ENCODE measurements at regions of chr11 and their contacts with region 1.

Region 1: GRCh38 chr11:36478700-36479329 is 31.3 kb downstream of the TRAF6 start:
- DNase-seq: peak; percentile 71 to 83 (median 79)
- H3K4me3 ChIP-seq: no peak overlapping the region
- H3K27ac ChIP-seq: no peak overlapping the region
- H3K4me1 ChIP-seq: peaks cover 0 to 3% (median 0%) of the 10 kb centered on the region in 4 experiments
- H3K27me3 ChIP-seq: no peaks in the 10 kb centered on the region

Region 2: GRCh38 chr11:36271794-36272407 is 206.9 kb before region 1 on chr11:
- CTCF ChIA-PET with region 1: interaction called, 14 read pairs
- POLR2A ChIA-PET with region 1: no interaction called
- DNase-seq: peak in 1 of 3 donors; percentile 10
- H3K4me3 ChIP-seq: no peak overlapping the region
- H3K27ac ChIP-seq: no peak overlapping the region
- H3K4me1 ChIP-seq: no peaks in the 10 kb centered on the region
- H3K27me3 ChIP-seq: no peaks in the 10 kb centered on the region

Region 3: DNA sequence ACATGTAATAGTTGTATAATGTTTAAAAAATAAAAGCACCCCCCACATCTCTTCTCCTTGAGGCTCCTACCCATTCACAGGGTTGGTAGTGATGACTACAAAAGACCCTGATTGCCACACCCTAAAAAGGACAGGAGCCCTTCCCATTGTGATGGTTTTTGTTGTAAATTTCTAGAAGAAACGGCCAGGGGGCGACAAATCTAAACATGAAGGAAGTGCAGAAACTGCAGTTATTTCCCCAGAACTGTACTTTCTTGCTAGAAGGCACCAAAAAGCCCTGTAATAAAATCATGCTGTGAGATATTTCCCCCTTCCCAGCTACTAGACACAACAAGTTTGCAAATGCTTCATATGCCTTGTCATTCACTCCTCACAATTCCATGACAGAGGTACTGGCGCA is 171.9 kb before region 1 on chr11:
- CTCF ChIA-PET with region 1: interaction called, 25 read pairs
- POLR2A ChIA-PET with region 1: no interaction called
- DNase-seq: peak; percentile 68 to 80 (median 74)
- H3K4me3 ChIP-seq: no peak overlapping the region
- H3K27ac ChIP-seq: no peak overlapping the region
- H3K4me1 ChIP-seq: peaks cover 0 to 5% (median 0%) of the 10 kb centered on the region in 4 experiments
- H3K27me3 ChIP-seq: no peaks in the 10 kb centered on the region

Region 4: GRCh38 chr11:36363361-36364268 is 115.2 kb before region 1 on chr11:
- CTCF ChIA-PET with region 1: interaction called, 14 read pairs
- POLR2A ChIA-PET with region 1: no interaction called
- DNase-seq: peak in 2 of 3 donors; percentile 77 to 87
- H3K4me3 ChIP-seq: no peak overlapping the region
- H3K27ac ChIP-seq: no peak overlapping the region
- H3K4me1 ChIP-seq: peaks cover 19 to 73% (median 57%) of the 10 kb centered on the region in 4 experiments
- H3K27me3 ChIP-seq: no peaks in the 10 kb centered on the region

Region 5: GRCh38 chr11:36419791-36420424 is 58.9 kb before region 1 on chr11:
- CTCF ChIA-PET with region 1: interaction called, 17 read pairs
- POLR2A ChIA-PET with region 1: no interaction called
- DNase-seq: no peak
- H3K4me3 ChIP-seq: no peak overlapping the region
- H3K27ac ChIP-seq: no peak overlapping the region
- H3K4me1 ChIP-seq: peaks cover 32 to 72% (median 54%) of the 10 kb centered on the region in 4 experiments
- H3K27me3 ChIP-seq: no peaks in the 10 kb centered on the region

Region 6: DNA sequence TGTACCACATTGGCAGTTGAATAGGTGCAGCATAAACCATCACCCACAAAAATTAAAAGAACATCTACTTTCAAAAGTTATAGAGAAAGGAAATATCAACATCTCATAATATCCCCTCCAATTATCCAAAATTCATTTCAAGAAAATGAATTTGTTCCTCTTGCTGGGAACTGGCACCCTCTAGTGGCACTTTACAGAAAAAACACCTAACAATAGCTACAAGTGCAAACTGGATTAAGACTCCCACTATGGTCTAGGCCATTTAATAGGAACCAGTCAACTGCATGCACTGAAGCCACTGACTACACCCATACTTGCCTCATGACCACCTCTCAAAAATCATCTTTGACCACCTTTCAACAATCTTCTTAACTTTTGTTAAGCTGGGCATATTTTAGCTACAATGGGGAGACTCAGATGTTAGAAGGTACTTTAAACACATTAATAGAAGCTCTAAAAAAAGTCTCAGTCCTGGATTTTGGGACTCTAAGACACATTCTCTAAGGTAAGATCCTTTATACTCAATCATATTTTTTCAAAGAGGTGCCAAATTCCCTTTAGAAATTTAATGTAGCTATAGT is 14.0 kb after region 1 on chr11:
- CTCF ChIA-PET with region 1: interaction called, 36 read pairs
- POLR2A ChIA-PET with region 1: no interaction called
- DNase-seq: peak; percentile 73 to 87 (median 80)
- H3K4me3 ChIP-seq: no peak overlapping the region
- H3K27ac ChIP-seq: no peak overlapping the region
- H3K4me1 ChIP-seq: peaks cover 1 to 15% (median 9%) of the 10 kb centered on the region in 4 experiments
- H3K27me3 ChIP-seq: no peaks in the 10 kb centered on the region

Region 7: DNA sequence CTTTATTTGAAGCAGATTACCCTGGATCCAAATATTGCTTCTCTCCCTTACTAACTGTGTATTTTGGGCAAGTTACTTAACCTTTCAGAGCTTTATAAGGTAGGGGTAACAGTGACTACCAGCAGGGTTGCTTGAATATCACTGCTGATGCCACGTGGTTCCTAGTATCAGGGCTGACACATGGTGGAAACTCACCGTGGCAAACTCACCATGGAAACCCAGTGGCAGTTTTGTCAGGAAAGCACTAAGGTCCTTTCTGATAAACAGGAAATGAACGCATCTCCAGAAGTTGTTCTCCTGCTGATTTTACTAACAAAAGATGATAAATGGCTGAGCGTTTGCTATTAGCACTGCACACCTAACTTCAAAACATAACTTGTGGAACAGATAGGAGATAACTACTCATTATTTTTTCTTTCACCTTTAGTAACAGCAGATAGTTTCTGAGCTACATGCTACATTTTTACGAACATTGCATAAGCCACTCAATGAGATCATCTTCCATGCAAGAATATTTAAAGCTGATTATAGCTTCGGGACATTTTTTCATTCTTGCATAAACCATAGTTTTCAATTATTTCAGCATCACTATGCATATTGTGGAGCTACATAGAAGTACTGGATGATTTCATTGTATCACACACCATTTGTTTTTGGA is 178.9 kb after region 1 on chr11:
- CTCF ChIA-PET with region 1: no interaction called
- POLR2A ChIA-PET with region 1: no interaction called
- DNase-seq: peak in 2 of 3 donors; percentile 44 to 62
- H3K4me3 ChIP-seq: no peak overlapping the region
- H3K27ac ChIP-seq: no peak overlapping the region
- H3K4me1 ChIP-seq: peaks cover 0 to 5% (median 2%) of the 10 kb centered on the region in 4 experiments
- H3K27me3 ChIP-seq: no peaks in the 10 kb centered on the region